ENCODE measurements at regions of chr1 and their contacts with region 1.

Region 1: DNA sequence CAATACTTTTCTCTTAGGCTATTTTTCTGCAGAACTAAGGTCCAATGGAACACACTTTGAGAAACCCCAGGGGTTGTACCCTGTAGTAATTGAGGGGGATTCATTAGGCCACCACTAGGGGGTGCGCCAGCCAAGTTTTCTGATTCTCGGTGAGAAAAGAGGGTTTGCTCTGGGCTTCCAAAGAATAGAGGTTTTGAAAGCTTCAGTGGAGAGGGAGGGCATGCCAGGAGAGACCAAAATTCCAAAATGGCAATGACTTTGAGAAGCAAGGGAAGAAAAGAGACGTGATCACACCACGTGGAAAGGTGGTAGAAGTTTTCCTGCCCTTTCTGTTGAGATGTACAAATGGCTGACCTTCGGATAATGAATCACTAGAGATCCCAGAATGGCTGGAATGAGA is 323.3 kb downstream of the RPS6KC1 start:
- DNase-seq: peak; percentile 78 to 82
- H3K4me3 ChIP-seq: no peak overlapping the region
- H3K4me3 Mint-ChIP-seq: no peak overlapping the region
- H3K27ac Mint-ChIP-seq: peak overlapping the region; percentile 13
- H3K4me1 ChIP-seq: peaks cover 80% of the 10 kb centered on the region
- H3K4me1 Mint-ChIP-seq: peaks cover 61% of the 10 kb centered on the region
- H3K27me3 ChIP-seq: no peaks in the 10 kb centered on the region
- H3K27me3 Mint-ChIP-seq: no peaks in the 10 kb centered on the region
- CTCF ChIP-seq: peak; percentile 73 to 86

Region 2: GRCh38 chr1:213244664-213245091 is 129.7 kb before region 1 on chr1:
- CTCF ChIA-PET with region 1: no interaction called
- POLR2A ChIA-PET with region 1: no interaction called
- intact Hi-C with region 1: loop called (anchors 1 kb)
- DNase-seq: peak in 1 of 2 experiments; percentile 67
- H3K4me3 ChIP-seq: no peak overlapping the region
- H3K4me3 Mint-ChIP-seq: no peak overlapping the region
- H3K27ac Mint-ChIP-seq: peak overlapping the region; percentile 50
- H3K4me1 ChIP-seq: peaks cover 15% of the 10 kb centered on the region
- H3K4me1 Mint-ChIP-seq: peaks cover 27% of the 10 kb centered on the region
- H3K27me3 ChIP-seq: no peaks in the 10 kb centered on the region
- H3K27me3 Mint-ChIP-seq: no peaks in the 10 kb centered on the region
- CTCF ChIP-seq: peak; percentile 76 to 78

Region 3: GRCh38 chr1:213327017-213327667 is 47.2 kb before region 1 on chr1:
- CTCF ChIA-PET with region 1: no interaction called
- POLR2A ChIA-PET with region 1: no interaction called
- intact Hi-C with region 1: no loop called
- DNase-seq: no peak
- H3K4me3 ChIP-seq: no peak overlapping the region
- H3K4me3 Mint-ChIP-seq: no peak overlapping the region
- H3K27ac Mint-ChIP-seq: peak overlapping the region; percentile 18
- H3K4me1 ChIP-seq: 0 out of 2 replicates have a peak, but pooled peaks cover 3% of the 10 kb centered on the region
- H3K4me1 Mint-ChIP-seq: peaks cover 10% of the 10 kb centered on the region
- H3K27me3 ChIP-seq: no peaks in the 10 kb centered on the region
- H3K27me3 Mint-ChIP-seq: no peaks in the 10 kb centered on the region
- CTCF ChIP-seq: no peak

Region 4: DNA sequence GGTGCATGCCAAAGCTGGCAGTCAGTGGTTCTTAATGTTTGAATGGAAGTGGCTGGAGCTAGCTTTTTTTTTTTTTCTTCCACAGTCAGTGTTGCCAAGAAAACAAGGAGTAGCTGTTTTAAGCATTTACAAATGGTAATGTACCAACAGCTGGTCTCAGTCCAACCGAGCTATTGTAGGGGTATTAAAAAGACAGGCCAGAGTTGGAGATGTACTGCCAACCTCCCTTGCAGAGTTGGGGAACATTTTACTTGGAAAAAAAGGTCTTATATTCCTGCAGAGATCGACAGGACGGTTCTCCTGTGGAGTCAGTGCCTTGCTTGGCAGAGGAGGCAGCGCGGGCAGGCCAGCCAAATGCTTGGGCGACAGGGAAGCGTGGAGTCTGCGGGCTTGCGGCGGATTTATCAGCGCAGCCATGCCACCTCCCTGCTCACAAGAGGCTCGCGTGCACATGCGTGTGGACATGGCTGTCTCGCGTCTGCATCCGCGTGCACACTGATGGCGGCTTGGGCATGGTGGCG is 14.8 kb after region 1 on chr1:
- CTCF ChIA-PET with region 1: no interaction called
- POLR2A ChIA-PET with region 1: no interaction called
- intact Hi-C with region 1: no loop called
- DNase-seq: no peak
- H3K4me3 ChIP-seq: no peak overlapping the region
- H3K4me3 Mint-ChIP-seq: no peak overlapping the region
- H3K27ac Mint-ChIP-seq: no peak overlapping the region
- H3K4me1 ChIP-seq: peaks cover 8% of the 10 kb centered on the region
- H3K4me1 Mint-ChIP-seq: peaks cover 27% of the 10 kb centered on the region
- H3K27me3 ChIP-seq: no peaks in the 10 kb centered on the region
- H3K27me3 Mint-ChIP-seq: no peaks in the 10 kb centered on the region
- CTCF ChIP-seq: no peak

Region 5: DNA sequence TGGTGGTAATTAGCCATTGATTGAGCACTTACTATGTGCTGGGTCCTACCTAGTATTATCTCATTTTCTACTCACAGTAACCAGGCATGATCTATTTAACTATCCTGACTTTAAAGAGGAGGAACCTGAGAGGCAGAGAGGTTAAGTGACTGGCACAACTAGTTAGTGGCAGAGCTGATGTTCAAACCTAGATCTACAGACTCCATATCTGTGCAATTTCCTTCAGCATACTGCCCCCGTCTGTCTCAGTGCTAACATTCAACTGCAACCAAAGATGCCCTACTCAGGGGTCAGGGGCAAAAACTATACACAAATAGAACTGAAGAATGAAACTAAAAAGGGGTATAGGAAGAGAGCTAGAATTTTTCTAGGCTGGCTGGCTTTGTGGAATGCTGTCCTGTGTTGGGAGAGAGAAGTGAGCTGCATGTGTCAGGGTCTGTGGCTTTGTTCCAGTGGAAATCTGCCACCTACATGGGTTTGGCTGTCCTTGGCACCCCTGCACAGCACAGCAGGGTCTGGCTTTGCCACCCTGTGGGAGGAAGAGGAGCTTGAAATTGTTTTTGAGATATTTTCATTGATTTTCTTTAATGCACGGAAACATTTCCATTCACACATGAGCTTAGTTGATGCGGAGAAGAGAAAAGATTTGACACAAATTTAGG is 45.1 kb after region 1 on chr1:
- CTCF ChIA-PET with region 1: interaction called, 6 read pairs
- POLR2A ChIA-PET with region 1: no interaction called
- intact Hi-C with region 1: loop called (anchors 2 kb)
- DNase-seq: peak in 1 of 2 experiments; percentile 23
- H3K4me3 ChIP-seq: no peak overlapping the region
- H3K4me3 Mint-ChIP-seq: no peak overlapping the region
- H3K27ac Mint-ChIP-seq: no peak overlapping the region
- H3K4me1 ChIP-seq: peaks cover 24% of the 10 kb centered on the region
- H3K4me1 Mint-ChIP-seq: peaks cover 13% of the 10 kb centered on the region
- H3K27me3 ChIP-seq: no peaks in the 10 kb centered on the region
- H3K27me3 Mint-ChIP-seq: no peaks in the 10 kb centered on the region
- CTCF ChIP-seq: peak in 1 of 2 experiments; percentile 13

Region 6: GRCh38 chr1:213669964-213670691 is 295.8 kb after region 1 on chr1:
- CTCF ChIA-PET with region 1: no interaction called
- POLR2A ChIA-PET with region 1: no interaction called
- intact Hi-C with region 1: loop called (anchors 10 kb)
- DNase-seq: peak; percentile 56 to 67
- H3K4me3 ChIP-seq: no peak overlapping the region
- H3K4me3 Mint-ChIP-seq: no peak overlapping the region
- H3K27ac Mint-ChIP-seq: no peak overlapping the region
- H3K4me1 ChIP-seq: peaks cover 11% of the 10 kb centered on the region
- H3K4me1 Mint-ChIP-seq: peaks cover 12% of the 10 kb centered on the region
- H3K27me3 ChIP-seq: no peaks in the 10 kb centered on the region
- H3K27me3 Mint-ChIP-seq: no peaks in the 10 kb centered on the region
- CTCF ChIP-seq: peak; percentile 9 to 21

Region 7: DNA sequence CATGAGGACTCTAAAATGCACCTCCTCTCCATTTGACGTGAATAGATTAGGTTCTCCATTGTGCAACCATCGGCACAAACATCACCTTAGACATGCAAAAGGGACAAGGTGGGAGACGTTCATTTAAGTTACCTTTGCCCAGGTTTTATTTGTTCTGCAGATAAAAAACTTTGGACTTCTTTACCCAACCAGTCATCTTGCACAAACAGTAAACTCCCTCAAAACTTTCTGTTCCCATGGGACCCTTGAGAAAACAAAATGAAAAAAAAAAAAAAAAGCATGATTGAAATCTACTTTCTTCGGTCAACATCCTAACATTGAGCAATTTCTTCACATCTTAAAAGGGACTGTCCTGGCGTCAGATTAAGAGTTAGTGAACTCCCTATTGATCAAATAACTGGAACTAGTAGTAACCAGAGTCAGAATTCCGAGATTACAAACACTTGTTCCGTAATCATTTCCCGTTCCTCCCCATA is 582.0 kb after region 1 on chr1:
- CTCF ChIA-PET with region 1: no interaction called
- POLR2A ChIA-PET with region 1: no interaction called
- intact Hi-C with region 1: loop called (anchors 1 kb)
- DNase-seq: peak; percentile 77 to 82
- H3K4me3 ChIP-seq: no peak overlapping the region
- H3K4me3 Mint-ChIP-seq: peak overlapping the region; percentile 48
- H3K27ac Mint-ChIP-seq: peak overlapping the region; percentile 69
- H3K4me1 ChIP-seq: peaks cover 33% of the 10 kb centered on the region
- H3K4me1 Mint-ChIP-seq: peaks cover 18% of the 10 kb centered on the region
- H3K27me3 ChIP-seq: no peaks in the 10 kb centered on the region
- H3K27me3 Mint-ChIP-seq: no peaks in the 10 kb centered on the region
- CTCF ChIP-seq: no peak

Region 8: DNA sequence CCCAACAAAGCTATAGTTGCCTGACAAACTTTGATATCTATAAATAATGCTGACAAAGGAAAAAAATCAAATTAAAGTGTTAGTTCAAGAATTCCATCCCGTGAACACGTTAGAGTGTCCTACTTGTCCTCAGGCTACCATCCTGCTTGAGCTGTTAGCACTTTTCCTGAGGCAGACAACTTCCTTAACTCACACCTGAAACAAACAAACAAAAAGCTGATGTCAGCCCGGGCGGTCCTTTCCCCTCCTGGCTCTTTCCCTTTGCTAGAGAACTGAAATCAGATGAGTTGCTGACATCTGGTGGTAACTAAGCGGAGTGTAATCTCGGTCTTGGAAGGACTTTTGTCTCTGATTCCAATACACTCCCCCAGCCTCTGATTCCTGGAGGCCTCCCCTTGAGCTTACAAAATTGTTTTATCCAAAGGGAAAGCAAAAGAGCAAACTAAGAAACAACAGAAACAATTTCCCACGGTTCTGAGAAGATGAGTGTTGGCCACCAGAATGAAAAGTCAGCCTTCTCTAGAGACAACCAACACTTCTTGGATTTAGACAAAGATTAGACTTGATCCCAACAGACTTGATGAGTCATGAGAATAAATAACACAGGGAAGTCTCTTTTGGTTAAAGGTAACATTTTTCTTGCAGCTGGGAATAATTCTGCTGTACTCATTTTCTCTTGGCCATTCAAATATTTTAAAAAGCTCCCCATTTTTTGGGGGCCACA is 748.9 kb after region 1 on chr1:
- CTCF ChIA-PET with region 1: interaction called, 5 read pairs
- POLR2A ChIA-PET with region 1: no interaction called
- intact Hi-C with region 1: loop called (anchors 1 kb)
- DNase-seq: peak; percentile 67 to 75
- H3K4me3 ChIP-seq: no peak overlapping the region
- H3K4me3 Mint-ChIP-seq: no peak overlapping the region
- H3K27ac Mint-ChIP-seq: peak overlapping the region; percentile 8
- H3K4me1 ChIP-seq: peaks cover 18% of the 10 kb centered on the region; the same call in 1 of the 2 replicates
- H3K4me1 Mint-ChIP-seq: peaks cover 17% of the 10 kb centered on the region
- H3K27me3 ChIP-seq: no peaks in the 10 kb centered on the region
- H3K27me3 Mint-ChIP-seq: no peaks in the 10 kb centered on the region
- CTCF ChIP-seq: peak; percentile 69 to 78